ENCODE measurements at regions of chr22 and their contacts with region 1.

Region 1: DNA sequence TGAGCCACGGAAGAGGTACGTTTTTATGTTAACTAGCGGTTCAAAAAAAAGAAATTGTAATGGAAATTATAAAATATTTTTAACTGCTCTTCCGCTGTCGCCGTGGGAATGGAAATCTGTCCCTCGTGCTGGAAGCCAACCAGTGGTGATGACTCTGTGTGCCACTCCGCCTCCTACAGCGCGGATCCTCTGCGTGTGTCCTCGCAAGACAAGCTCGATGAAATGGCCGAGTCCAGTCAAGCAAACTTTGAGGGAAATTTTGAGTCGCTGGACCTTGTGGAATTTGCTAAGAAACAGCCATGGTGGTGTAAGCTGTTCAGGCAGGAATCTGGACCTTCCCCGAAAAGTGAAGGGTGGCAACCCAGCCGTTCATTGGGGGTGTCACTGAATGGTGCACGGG is 2.9 kb upstream of the CBX7 start:
- DNase-seq: no peak
- CTCF ChIP-seq: no peak

Region 2: GRCh38 chr22:39239561-39240423 is 84.4 kb after region 1 on chr22:
- CTCF ChIA-PET with region 1: no interaction called
- POLR2A ChIA-PET with region 1: interaction called, 10 read pairs
- DNase-seq: no peak
- CTCF ChIP-seq: no peak

Region 3: DNA sequence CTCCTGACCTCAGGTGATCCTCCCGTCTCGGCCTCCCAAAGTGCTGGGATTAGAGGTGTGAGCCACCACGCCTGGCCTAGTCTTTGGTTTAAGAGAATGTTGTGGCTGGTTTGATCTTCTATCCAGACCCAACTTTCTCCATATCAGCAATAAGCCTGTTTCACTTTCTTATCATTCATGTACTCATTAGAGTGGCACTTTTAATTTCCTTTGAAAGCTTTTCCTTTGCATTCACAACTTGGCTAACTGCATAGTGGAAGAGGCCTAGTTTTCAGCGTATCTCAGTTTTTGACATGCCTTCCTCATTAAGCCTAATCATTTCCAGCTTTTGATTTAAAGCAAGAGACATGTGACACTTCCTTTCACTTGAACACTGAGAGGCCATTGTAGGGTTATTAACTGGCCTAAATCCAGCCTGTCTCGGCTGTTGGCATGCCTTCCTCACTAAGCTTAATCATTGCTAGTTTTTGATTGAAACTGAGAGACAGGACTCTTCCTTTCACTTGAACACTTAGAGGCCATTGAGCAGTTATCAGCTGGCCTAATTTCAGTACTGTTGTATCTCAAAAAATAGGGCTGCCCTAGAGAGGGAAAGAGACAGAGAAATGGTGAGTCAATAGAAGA is 177.1 kb after region 1 on chr22:
- CTCF ChIA-PET with region 1: no interaction called
- POLR2A ChIA-PET with region 1: no interaction called
- DNase-seq: no peak
- CTCF ChIP-seq: no peak

Measured in GM10248 (cell line).